MCF 10A (cell line): ENCODE measurements at regions of chr11 and their contacts with region 1.

Region 1: GRCh38 chr11:17077520-17078401 is at the start of gene RPS13:
- DNase-seq: peak; percentile 99
- H3K4me3 Mint-ChIP-seq: peak within 1 kb of the TSS; percentile 93
- H3K27ac Mint-ChIP-seq: peak within 1 kb of the TSS; percentile 99
- H3K4me1 Mint-ChIP-seq: peaks cover 27% of the 10 kb centered on the region
- H3K27me3 Mint-ChIP-seq: no peaks in the 10 kb centered on the region
- CTCF ChIP-seq: no peak
- total RNA-seq, gene RPS13: 1,551 and 1,734 TPM in 2 replicates

Region 2: DNA sequence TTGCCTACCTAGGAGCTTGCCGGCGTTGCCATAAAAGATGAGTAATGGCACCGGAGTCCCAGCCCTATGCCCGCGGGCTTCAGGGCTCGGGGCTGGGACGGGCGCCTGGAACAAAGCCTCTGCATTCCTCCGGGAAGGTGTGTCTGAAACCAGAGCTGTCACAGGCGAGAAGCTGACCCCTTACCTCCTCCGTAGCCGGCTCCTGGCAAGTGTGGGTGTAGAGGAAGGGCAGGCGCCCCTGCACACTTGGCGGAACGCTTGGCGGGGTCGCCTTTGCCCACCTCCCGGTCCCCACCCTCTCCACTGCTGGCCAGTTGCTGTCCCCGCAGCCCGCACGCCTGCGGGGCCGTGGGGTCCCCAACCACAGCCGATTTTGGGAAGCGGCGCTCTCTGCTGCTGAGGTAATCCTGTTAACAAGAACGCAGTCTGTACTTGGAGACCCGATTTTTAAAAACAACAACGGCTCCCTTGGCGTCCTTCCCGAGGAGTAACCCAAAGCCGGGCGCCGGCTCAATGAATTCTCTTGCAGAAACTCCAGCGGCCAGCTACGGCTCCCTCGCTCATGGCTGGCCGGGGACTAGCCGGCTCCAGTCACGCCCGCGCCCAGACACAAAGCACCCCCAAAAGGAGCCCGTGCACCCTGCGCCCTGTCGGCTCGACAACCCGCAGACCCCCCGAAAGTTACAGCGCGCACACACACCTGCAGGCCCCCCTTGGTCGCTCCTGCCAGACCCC is 152.8 kb before region 1 on chr11:
- CTCF ChIA-PET with region 1: interaction called, 3 read pairs
- POLR2A ChIA-PET with region 1: interaction called, 16 read pairs
- intact Hi-C with region 1: no loop called
- DNase-seq: peak; percentile 85
- H3K4me3 Mint-ChIP-seq: peak overlapping the region; percentile 79
- H3K27ac Mint-ChIP-seq: peak overlapping the region; percentile 10
- H3K4me1 Mint-ChIP-seq: peaks cover 24% of the 10 kb centered on the region
- H3K27me3 Mint-ChIP-seq: no peaks in the 10 kb centered on the region
- CTCF ChIP-seq: no peak

Region 3: GRCh38 chr11:16945671-16946469 is 131.9 kb before region 1 on chr11:
- CTCF ChIA-PET with region 1: interaction called, 3 read pairs
- POLR2A ChIA-PET with region 1: no interaction called
- intact Hi-C with region 1: loop called (anchors 5 kb)
- DNase-seq: peak; percentile 76
- H3K4me3 Mint-ChIP-seq: no peak overlapping the region
- H3K27ac Mint-ChIP-seq: no peak overlapping the region
- H3K4me1 Mint-ChIP-seq: no peaks in the 10 kb centered on the region
- H3K27me3 Mint-ChIP-seq: no peaks in the 10 kb centered on the region
- CTCF ChIP-seq: peak; percentile 75